ENCODE measurements at regions of chr9 and their contacts with region 1.

Region 1: GRCh38 chr9:4382722-4383317 is 83.0 kb upstream of the GLIS3 start:
- DNase-seq: no peak
- ATAC-seq: peak; percentile 34 to 47

Region 2: GRCh38 chr9:4167083-4167671 is 215.6 kb before region 1 on chr9:
- intact Hi-C with region 1: no loop called
- DNase-seq: no peak
- ATAC-seq: no peak

Region 3: DNA sequence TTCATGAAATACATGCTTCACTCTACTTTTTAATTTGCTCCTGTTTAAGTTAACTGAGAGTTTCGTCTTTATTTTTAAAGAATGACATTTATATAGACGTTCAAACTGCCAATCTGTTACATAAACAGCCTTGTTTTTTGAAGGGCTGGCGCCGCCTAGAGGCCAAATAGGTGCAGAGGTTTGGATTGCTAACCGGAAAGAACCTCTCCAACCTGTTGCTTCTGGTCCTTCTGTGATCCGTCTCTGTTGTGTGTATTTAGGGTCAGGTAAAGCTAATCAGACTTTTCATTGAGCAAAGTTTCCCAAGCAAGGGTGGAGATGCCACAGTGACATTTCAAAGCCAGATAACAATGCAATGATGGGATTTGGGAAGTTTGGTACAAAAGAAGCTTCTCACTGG is 43.5 kb before region 1 on chr9:
- intact Hi-C with region 1: no loop called
- DNase-seq: peak; percentile 83
- ATAC-seq: peak; percentile 66 to 74

Region 4: GRCh38 chr9:4640027-4640426 is 257.2 kb after region 1 on chr9:
- intact Hi-C with region 1: loop called (anchors 2 to 5 kb)
- DNase-seq: no peak
- ATAC-seq: no peak